ENCODE measurements at regions of chr6 and their contacts with region 1.

Region 1: GRCh38 chr6:110944681-110945151 is 13.8 kb upstream of the GTF3C6 start:
- DNase-seq: peak; percentile 82
- CTCF ChIP-seq: no peak

Region 2: GRCh38 chr6:110534731-110535492 is 409.8 kb before region 1 on chr6:
- in situ Hi-C with region 1: loop called (anchors 5 kb)
- DNase-seq: no peak
- CTCF ChIP-seq: no peak

Region 3: GRCh38 chr6:110671116-110671846 is 273.4 kb before region 1 on chr6:
- in situ Hi-C with region 1: loop called (anchors 10 kb)
- DNase-seq: no peak
- CTCF ChIP-seq: no peak

Region 4: GRCh38 chr6:110831405-110831804 is 113.3 kb before region 1 on chr6:
- in situ Hi-C with region 1: no loop called
- DNase-seq: no peak
- CTCF ChIP-seq: no peak

Measured in GM13976 (cell line).